Heart right ventricle (tissue), 16 donors: ENCODE measurements at regions of chr21 and their contacts with region 1.

Region 1: GRCh38 chr21:24969068-24969467 is 638.2 kb downstream of the MRPL39 start:
- DNase-seq: no peak
- ATAC-seq: no peak
- H3K4me3 ChIP-seq: no peak overlapping the region
- H3K27ac ChIP-seq: no peak overlapping the region
- H3K4me1 ChIP-seq: no peaks in the 10 kb centered on the region
- H3K27me3 ChIP-seq: no peaks in the 10 kb centered on the region
- CTCF ChIP-seq: no peak

Region 2: DNA sequence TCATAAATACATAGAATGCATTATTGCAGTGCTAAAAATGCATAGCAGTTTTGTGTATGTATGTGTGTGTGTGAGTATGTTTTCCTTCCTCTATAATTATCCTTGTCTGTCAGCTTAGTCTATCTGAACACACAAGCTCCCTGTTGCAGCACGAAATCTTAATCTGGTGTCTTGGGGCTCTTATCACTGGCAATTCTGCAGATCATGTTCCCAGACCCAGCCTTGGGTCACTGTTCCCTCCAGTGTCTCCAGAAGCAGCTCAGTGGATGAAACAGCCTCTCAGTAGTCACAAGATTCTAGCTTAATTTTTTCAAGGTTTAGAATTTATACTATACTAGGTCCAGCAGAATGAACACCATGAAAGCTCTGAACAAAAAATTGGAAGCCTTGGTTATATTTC is 139.7 kb before region 1 on chr21:
- intact Hi-C with region 1: no loop called
- DNase-seq: no peak
- ATAC-seq: no peak
- H3K4me3 ChIP-seq: no peak overlapping the region
- H3K27ac ChIP-seq: peak overlapping the region in 1 of 10 donors; percentile 11
- H3K4me1 ChIP-seq: no peaks in the 10 kb centered on the region
- H3K27me3 ChIP-seq: no peaks in the 10 kb centered on the region
- CTCF ChIP-seq: no peak

Region 3: GRCh38 chr21:24995216-24995615 is 26.1 kb after region 1 on chr21:
- intact Hi-C with region 1: loop called in 1 of 10 experiments (anchors 1 kb)
- DNase-seq: no peak
- ATAC-seq: no peak
- H3K4me3 ChIP-seq: no peak overlapping the region
- H3K27ac ChIP-seq: no peak overlapping the region
- H3K4me1 ChIP-seq: no peaks in the 10 kb centered on the region
- H3K27me3 ChIP-seq: no peaks in the 10 kb centered on the region
- CTCF ChIP-seq: no peak